T-cell (primary cell): ENCODE measurements at regions of chr11 and their contacts with region 1.

Region 1: GRCh38 chr11:93736129-93736528 is 5.2 kb downstream of the TAF1D start:
- DNase-seq: no peak
- ATAC-seq: no peak
- H3K4me3 ChIP-seq: no peak overlapping the region
- H3K4me3 Mint-ChIP-seq: no peak overlapping the region
- H3K27ac ChIP-seq: peak overlapping the region; percentile 32
- H3K27ac Mint-ChIP-seq: peak overlapping the region; percentile 48 to 78
- H3K4me1 ChIP-seq: peaks cover 24 to 32% of the 10 kb centered on the region in 2 experiments
- H3K4me1 Mint-ChIP-seq: peaks cover 59 to 77% (median 75%) of the 10 kb centered on the region in 3 donors
- H3K27me3 ChIP-seq: no peaks in the 10 kb centered on the region
- H3K27me3 Mint-ChIP-seq: no peaks in the 10 kb centered on the region

Region 2: GRCh38 chr11:93197380-93198214 is 538.5 kb before region 1 on chr11 and contains the start of gene SLC36A4:
- CTCF ChIA-PET with region 1: interaction called in 1 of 2 experiments, 11 read pairs
- POLR2A ChIA-PET with region 1: no interaction called
- DNase-seq: peak; percentile 71 to 92 (median 82)
- ATAC-seq: peak; percentile 88 to 90 (median 90)
- H3K4me3 ChIP-seq: peak within 1 kb of the TSS; percentile 65 to 85
- H3K4me3 Mint-ChIP-seq: peak within 1 kb of the TSS; percentile 88 to 95 (median 91)
- H3K27ac ChIP-seq: peak within 1 kb of the TSS; percentile 91
- H3K27ac Mint-ChIP-seq: peak within 1 kb of the TSS; percentile 92 to 93
- H3K4me1 ChIP-seq: peaks cover 5 to 8% of the 10 kb centered on the region in 2 experiments
- H3K4me1 Mint-ChIP-seq: peaks cover 17 to 28% (median 22%) of the 10 kb centered on the region in 3 donors
- H3K27me3 ChIP-seq: no peaks in the 10 kb centered on the region
- H3K27me3 Mint-ChIP-seq: peaks cover 5 to 8% of the 10 kb centered on the region in 2 donors
- total RNA-seq, gene SLC36A4: 13.3 to 21.8 (median 14.6) TPM

Region 3: GRCh38 chr11:93857413-93858120 is 121.4 kb after region 1 on chr11:
- CTCF ChIA-PET with region 1: no interaction called
- POLR2A ChIA-PET with region 1: no interaction called
- DNase-seq: no peak
- ATAC-seq: no peak
- H3K4me3 ChIP-seq: no peak overlapping the region
- H3K4me3 Mint-ChIP-seq: no peak overlapping the region
- H3K27ac ChIP-seq: no peak overlapping the region
- H3K27ac Mint-ChIP-seq: no peak overlapping the region
- H3K4me1 ChIP-seq: no peaks in the 10 kb centered on the region
- H3K4me1 Mint-ChIP-seq: no peaks in the 10 kb centered on the region
- H3K27me3 ChIP-seq: no peaks in the 10 kb centered on the region
- H3K27me3 Mint-ChIP-seq: peaks cover 4 to 10% of the 10 kb centered on the region in 2 donors